ENCODE measurements at regions of chr14 and their contacts with region 1.

Region 1: DNA sequence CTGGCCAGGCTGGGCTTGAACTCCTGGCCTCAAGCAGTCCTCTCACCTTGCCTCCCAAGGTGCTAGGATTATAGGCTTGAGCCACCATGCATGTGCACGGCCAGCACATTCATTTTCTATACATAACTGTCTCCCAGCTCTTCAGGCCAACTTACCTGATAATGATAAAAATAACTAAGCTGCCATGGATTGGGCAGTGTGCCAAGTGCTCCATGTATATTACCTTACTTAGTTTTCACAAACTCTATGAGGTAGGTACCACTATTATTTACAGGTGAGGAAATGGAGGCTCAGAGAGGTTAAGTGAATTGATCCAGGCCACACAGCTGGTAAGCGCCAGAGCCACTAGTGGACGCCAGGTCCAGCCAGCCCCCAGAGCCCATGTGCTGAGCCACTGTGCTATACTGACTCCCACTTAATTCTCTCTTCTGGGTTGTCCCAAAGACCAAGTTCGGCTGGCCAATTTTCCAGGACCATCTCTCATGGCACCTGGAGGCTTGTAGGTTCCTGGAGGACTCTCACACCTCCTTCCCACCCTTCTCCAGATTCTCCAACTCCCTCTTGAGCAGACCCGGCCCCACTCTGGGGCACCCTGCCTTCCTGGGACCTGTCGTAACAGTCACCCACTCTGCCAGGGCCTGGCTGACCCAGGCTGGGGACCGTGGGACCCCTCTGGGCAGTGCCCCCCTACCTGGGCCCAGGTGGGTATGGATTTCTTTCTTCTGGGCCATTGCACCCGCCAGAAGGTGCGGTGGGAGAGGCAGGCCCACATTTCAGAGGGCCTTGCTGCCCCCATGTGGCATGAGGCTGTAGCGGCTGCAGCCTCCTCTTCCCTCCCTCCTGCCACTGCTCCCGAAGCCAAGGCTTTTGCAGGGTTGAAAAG is 30.2 kb upstream of the CIPC start:
- DNase-seq: peak; percentile 74 to 93
- H3K4me3 ChIP-seq: no peak overlapping the region
- H3K27ac ChIP-seq: no peak overlapping the region
- H3K4me1 ChIP-seq: peaks cover 54% of the 10 kb centered on the region
- H3K27me3 ChIP-seq: no peaks in the 10 kb centered on the region
- CTCF ChIP-seq: peak; percentile 100

Region 2: GRCh38 chr14:76911473-76911872 is 156.4 kb before region 1 on chr14:
- CTCF ChIA-PET with region 1: interaction called, 63 read pairs
- POLR2A ChIA-PET with region 1: interaction called, 7 read pairs
- intact Hi-C with region 1: loop called (anchors 1 kb)
- DNase-seq: no peak
- H3K4me3 ChIP-seq: no peak overlapping the region
- H3K27ac ChIP-seq: no peak overlapping the region
- H3K4me1 ChIP-seq: peaks cover 42% of the 10 kb centered on the region
- H3K27me3 ChIP-seq: no peaks in the 10 kb centered on the region
- CTCF ChIP-seq: no peak

Region 3: GRCh38 chr14:76947078-76947837 is 120.6 kb before region 1 on chr14:
- CTCF ChIA-PET with region 1: interaction called, 9 read pairs
- POLR2A ChIA-PET with region 1: no interaction called
- intact Hi-C with region 1: loop called (anchors 1 kb)
- DNase-seq: peak; percentile 95 to 100
- H3K4me3 ChIP-seq: peak overlapping the region; percentile 15; the same call in 1 of the 2 replicates
- H3K27ac ChIP-seq: peak overlapping the region; percentile 93
- H3K4me1 ChIP-seq: peaks cover 81% of the 10 kb centered on the region
- H3K27me3 ChIP-seq: no peaks in the 10 kb centered on the region
- CTCF ChIP-seq: peak; percentile 59; the same call in 1 of the 2 replicates

Region 4: GRCh38 chr14:77007975-77008421 is 59.9 kb before region 1 on chr14:
- CTCF ChIA-PET with region 1: interaction called, 3 read pairs
- POLR2A ChIA-PET with region 1: no interaction called
- intact Hi-C with region 1: loop called (anchors 1 kb)
- DNase-seq: peak; percentile 95 to 99
- H3K4me3 ChIP-seq: peak overlapping the region; percentile 33; the same call in 1 of the 2 replicates
- H3K27ac ChIP-seq: peak overlapping the region; percentile 77
- H3K4me1 ChIP-seq: peaks cover 89% of the 10 kb centered on the region
- H3K27me3 ChIP-seq: no peaks in the 10 kb centered on the region
- CTCF ChIP-seq: no peak

Region 5: DNA sequence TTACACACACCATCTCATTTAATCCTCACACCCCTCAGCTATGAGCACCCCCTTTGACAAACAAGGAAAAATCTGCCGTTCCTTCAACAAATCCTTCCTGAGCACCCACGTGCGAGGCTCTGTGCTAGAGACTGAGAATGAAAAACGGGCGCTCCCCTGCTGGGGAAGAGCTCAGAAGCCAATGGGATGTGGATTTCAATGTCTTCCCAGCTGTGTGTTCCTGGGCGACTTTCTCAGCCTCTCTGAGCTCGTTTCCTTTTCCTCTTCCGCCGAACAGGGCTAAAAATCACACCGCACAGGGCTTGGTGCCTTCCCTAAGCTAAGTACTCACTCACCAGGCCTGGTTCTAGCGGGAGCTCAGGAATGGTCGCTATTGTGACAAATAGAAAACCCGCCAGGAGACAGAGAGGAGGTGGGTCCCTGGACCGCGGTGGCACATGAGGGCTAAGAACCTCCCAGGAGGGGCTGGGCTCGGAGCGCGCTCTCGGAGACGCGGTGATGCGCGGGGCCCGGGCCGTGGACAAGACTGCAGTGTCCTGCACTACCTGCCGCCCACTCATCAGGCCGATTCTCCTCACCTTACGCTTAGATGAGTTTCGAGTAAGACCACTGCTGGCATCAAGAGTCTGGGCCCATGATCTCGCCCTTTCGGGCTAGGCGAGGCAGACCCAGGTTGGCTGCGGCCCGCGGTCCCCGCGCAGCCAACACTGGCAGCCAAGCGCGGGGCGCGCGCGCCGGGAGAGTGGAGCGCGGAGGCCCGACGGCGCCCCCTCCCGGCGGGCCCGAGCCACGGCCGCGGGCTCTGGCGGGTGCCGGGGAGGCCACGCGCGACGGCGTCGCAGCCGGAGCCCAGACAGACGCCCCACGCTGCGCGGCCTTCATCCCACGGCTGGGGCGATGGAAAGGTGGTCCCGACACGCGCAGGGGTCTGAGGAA is 56.7 kb after region 1 on chr14:
- CTCF ChIA-PET with region 1: interaction called, 38 read pairs
- POLR2A ChIA-PET with region 1: interaction called, 6 read pairs
- intact Hi-C with region 1: loop called (anchors 1 kb)
- DNase-seq: peak in 1 of 2 experiments; percentile 81
- H3K4me3 ChIP-seq: peak overlapping the region; percentile 31; the same call in 1 of the 2 replicates
- H3K27ac ChIP-seq: no peak overlapping the region
- H3K4me1 ChIP-seq: peaks cover 26% of the 10 kb centered on the region
- H3K27me3 ChIP-seq: peaks cover 51% of the 10 kb centered on the region
- CTCF ChIP-seq: peak; percentile 28; the same call in 1 of the 2 replicates

Measured in PC-9 (cell line).